ENCODE measurements at regions of chr1 and their contacts with region 1.

Region 1: GRCh38 chr1:187928288-187928687 is 1099.5 kb downstream of the PLA2G4A start:
- DNase-seq: peak; percentile 59
- H3K4me3 Mint-ChIP-seq: no peak overlapping the region
- H3K27ac Mint-ChIP-seq: peak overlapping the region; percentile 25
- H3K4me1 Mint-ChIP-seq: no peaks in the 10 kb centered on the region
- H3K27me3 Mint-ChIP-seq: no peaks in the 10 kb centered on the region
- CTCF ChIP-seq: peak; percentile 60

Region 2: DNA sequence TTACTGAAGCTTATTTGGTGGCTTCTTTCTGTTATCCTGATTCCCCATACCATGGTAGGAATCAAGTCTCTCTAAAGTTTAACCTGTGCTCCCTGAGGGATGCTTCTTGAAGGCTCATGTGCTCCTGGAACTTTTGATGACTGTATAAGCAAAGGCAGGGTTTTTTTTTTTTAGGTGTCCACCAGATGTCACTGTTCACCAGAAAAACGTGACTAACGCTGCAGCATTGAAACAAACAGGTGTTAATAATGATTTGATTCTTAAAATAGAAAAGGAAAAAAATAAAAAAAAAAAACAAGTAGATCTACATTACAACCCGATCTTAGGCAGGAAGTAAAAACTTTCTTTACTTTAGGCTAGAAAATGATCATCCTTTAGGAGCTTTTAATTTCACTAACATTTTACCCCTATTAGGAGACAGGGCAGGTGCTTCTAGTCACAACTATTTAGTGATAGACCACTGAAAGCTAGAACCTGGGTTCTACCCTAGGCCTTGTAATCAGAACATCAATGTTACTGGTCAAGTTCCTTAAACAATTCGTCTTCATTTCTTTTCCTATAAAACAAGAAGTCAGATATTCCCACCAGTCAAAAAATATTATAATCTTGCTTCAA is 876.6 kb before region 1 on chr1:
- CTCF ChIA-PET with region 1: interaction called, 5 read pairs
- POLR2A ChIA-PET with region 1: no interaction called
- intact Hi-C with region 1: loop called (anchors 10 kb)
- DNase-seq: peak; percentile 82
- H3K4me3 Mint-ChIP-seq: no peak overlapping the region
- H3K27ac Mint-ChIP-seq: no peak overlapping the region
- H3K4me1 Mint-ChIP-seq: no peaks in the 10 kb centered on the region
- H3K27me3 Mint-ChIP-seq: no peaks in the 10 kb centered on the region
- CTCF ChIP-seq: peak; percentile 76

Region 3: GRCh38 chr1:187413405-187414182 is 514.7 kb before region 1 on chr1:
- CTCF ChIA-PET with region 1: interaction called, 4 read pairs
- POLR2A ChIA-PET with region 1: no interaction called
- intact Hi-C with region 1: loop called (anchors 5 kb)
- DNase-seq: peak; percentile 45
- H3K4me3 Mint-ChIP-seq: no peak overlapping the region
- H3K27ac Mint-ChIP-seq: no peak overlapping the region
- H3K4me1 Mint-ChIP-seq: peaks cover 18% of the 10 kb centered on the region
- H3K27me3 Mint-ChIP-seq: no peaks in the 10 kb centered on the region
- CTCF ChIP-seq: peak; percentile 53

Region 4: GRCh38 chr1:187942986-187943385 is 14.7 kb after region 1 on chr1:
- CTCF ChIA-PET with region 1: interaction called, 29 read pairs
- POLR2A ChIA-PET with region 1: no interaction called
- intact Hi-C with region 1: no loop called
- DNase-seq: peak; percentile 35
- H3K4me3 Mint-ChIP-seq: no peak overlapping the region
- H3K27ac Mint-ChIP-seq: peak overlapping the region; percentile 3
- H3K4me1 Mint-ChIP-seq: peaks cover 12% of the 10 kb centered on the region
- H3K27me3 Mint-ChIP-seq: no peaks in the 10 kb centered on the region
- CTCF ChIP-seq: no peak

Region 5: DNA sequence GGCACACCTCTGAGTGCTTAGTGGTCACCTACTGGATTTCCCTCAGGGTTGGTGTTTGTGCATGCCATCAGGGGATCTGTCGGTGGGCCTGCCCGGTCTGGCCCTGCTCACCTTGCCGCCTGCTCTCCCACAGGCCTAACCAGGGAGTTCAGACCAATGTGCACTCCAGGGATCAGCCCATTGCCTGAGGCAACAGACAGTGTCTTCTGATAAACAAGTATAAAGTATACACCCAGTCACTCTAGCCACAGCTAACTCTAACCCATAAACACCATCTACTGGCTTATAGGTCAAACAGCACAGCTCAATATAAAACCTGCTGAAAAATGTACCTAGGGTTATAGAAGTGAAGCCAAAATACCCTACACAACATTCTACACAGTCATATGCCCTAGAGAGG is 200.5 kb after region 1 on chr1:
- CTCF ChIA-PET with region 1: interaction called, 16 read pairs
- POLR2A ChIA-PET with region 1: no interaction called
- intact Hi-C with region 1: no loop called
- DNase-seq: peak; percentile 27
- H3K4me3 Mint-ChIP-seq: no peak overlapping the region
- H3K27ac Mint-ChIP-seq: no peak overlapping the region
- H3K4me1 Mint-ChIP-seq: no peaks in the 10 kb centered on the region
- H3K27me3 Mint-ChIP-seq: no peaks in the 10 kb centered on the region
- CTCF ChIP-seq: no peak

Region 6: GRCh38 chr1:188386161-188386560 is 457.9 kb after region 1 on chr1:
- CTCF ChIA-PET with region 1: interaction called, 14 read pairs
- POLR2A ChIA-PET with region 1: no interaction called
- intact Hi-C with region 1: no loop called
- DNase-seq: no peak
- H3K4me3 Mint-ChIP-seq: no peak overlapping the region
- H3K27ac Mint-ChIP-seq: no peak overlapping the region
- H3K4me1 Mint-ChIP-seq: no peaks in the 10 kb centered on the region
- H3K27me3 Mint-ChIP-seq: no peaks in the 10 kb centered on the region
- CTCF ChIP-seq: no peak

Region 7: DNA sequence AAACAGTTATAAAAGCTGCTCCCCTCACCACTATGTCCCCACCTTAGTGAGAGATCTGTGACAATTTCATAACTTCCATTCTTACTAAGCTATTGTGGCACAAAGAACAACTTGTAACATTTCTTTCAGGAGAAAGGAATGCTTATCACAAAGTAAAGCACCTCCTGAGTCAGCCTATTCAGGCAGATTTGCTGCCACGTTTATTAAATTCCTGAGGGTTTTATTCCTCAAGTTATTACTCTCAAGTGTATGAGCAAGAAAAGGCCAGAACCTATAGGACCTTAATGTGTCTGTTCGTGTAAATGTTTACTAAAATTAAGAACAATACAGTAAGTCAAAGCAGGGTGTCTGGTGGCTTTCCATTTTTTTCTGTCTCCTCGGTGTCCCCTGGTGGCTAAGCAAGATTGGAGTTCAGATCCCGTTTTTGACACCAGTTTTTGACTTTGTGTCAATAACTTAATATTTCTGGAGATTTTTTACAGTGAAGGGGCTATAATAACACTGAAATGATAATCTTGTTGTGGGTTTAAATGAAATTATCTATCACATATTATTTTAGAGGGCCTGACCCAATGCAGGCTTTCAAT is 1009.8 kb after region 1 on chr1:
- CTCF ChIA-PET with region 1: interaction called, 4 read pairs
- POLR2A ChIA-PET with region 1: no interaction called
- intact Hi-C with region 1: loop called (anchors 1 kb)
- DNase-seq: peak; percentile 43
- H3K4me3 Mint-ChIP-seq: no peak overlapping the region
- H3K27ac Mint-ChIP-seq: no peak overlapping the region
- H3K4me1 Mint-ChIP-seq: no peaks in the 10 kb centered on the region
- H3K27me3 Mint-ChIP-seq: no peaks in the 10 kb centered on the region
- CTCF ChIP-seq: peak; percentile 46